ENCODE measurements at regions of chr3 and their contacts with region 1.

Region 1: DNA sequence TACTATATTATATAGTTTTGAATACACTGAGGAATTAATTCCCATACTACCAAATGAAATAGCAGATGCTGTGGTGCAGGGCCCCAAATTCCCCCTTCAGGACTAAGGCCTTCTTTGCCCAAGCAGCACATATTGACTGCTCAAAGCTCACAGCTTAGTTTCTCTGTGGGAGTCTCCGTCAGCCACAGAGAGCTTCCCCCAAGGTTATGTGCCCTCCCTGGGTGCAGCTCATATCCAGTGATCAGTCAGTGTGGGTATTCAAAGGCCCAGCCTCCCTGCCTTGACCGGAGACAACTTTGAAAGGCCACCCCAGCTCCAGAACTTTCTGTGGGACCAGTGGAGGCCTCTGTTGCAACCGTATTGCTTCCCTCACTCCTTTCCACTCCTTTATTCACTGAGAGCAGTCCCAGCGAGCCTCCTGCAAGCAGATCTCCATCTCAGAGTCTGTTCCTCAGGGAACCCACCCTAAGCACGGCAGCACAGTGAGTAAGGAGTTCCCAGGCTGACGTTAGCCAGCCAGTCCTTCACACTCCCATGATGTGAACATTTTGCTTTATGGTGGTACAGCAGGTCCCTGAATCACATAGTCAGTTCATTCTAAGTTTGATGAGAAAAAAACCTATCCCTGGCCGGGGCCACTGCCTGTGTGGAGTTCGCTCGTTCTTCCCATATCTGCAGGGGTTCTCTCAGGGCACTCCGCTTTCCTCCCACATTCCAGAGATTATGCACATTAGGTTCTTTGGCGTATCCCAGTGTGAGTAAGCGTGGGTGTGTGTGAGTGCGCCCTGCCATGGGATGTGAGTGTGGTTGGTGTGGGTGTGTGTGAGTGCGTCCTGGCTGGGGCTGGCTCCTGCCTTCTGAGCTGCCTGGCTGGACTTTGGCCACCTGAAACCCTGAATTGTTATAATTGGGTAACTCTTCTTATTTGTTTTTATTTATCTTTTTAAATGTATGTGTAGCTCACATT is 64.4 kb upstream of the PPARG start:
- DNase-seq: no peak

Region 2: DNA sequence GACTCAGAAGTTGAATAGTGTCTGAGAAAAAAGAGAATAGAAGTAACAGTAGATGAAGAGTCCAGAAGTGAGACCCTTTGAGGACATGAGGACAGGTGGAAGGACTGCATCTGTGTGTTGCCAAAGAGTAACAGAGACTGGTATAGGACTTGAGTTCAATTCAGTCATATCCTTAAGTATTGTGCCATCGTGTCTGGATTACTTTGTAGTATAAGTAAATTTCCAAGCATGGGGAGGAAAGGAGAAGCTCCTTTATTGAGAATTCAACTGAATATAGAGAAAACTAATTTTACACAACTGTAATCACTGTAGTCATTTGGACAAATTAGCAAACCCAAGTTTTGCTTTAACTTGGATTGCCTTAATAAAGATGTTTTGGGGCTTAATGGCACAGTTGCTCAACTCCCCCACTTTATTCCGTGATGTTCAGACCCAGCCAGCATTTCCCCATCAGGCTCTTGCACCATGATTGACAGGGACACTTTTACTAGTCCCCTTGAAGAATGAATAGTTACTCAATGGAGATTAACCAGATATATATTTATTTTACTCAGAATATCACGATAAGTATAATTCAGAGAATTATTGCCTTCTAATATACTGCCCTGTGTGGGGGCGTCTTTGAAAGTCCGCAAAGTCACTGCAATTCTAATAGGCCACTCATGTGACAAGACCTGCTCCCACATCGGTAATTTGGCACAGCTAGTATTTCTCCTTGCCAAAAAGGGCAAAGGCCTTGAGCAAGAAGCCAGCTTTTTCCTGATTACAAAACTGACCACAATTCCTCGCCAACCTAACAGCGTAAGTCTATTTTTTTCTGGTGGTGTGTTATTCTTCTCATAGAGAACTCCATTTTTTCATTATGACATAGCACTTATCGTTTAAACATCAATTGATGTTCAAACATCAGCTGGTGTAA is 125.7 kb after region 1 on chr3:
- in situ Hi-C with region 1: loop called (anchors 25 kb)
- DNase-seq: peak; percentile 19